ENCODE measurements at regions of chr1 and their contacts with region 1.

Region 1: DNA sequence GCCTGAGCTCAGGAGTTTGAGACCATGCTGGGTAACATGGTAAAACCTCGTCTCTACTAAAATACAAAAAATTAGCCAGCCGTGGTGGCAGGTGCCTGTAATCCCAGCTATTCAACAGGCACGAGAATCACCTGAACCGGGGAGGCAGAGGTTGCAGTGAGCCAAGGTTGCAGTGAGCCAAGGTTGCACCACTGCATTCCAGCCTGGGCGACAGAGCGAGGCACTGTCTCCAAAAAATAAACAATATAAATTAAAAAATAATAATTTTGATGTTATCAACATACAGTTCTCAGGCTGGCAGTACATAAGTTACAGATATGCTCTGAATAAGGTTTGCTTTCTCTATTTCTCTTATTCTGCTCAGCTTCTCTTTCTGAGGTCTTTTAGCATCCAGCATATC is 27.6 kb downstream of the GON4L start:
- DNase-seq: no peak
- H3K4me3 Mint-ChIP-seq: no peak overlapping the region
- H3K27ac Mint-ChIP-seq: no peak overlapping the region
- H3K4me1 Mint-ChIP-seq: peaks cover 12% of the 10 kb centered on the region
- H3K27me3 Mint-ChIP-seq: no peaks in the 10 kb centered on the region

Region 2: DNA sequence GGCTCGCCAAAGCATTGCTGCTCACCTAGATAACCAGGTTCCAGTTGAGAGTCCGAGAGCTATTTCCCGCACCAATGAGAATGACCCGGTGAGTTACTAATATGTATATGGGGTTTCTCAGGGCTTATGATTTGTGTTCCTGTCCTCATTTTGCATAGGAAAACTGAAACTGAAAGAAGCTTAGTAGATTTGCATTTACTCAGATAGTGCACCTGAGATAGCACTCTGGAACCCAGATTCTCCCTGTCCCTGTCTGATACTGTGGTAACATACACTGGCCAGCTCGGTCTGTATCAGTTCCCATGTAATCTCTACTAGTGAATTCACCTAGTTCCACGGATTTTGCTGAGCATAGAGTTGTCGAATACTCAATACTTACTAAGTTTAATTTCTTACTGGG is 112.3 kb before region 1 on chr1:
- CTCF ChIA-PET with region 1: no interaction called
- intact Hi-C with region 1: no loop called
- DNase-seq: no peak
- H3K4me3 Mint-ChIP-seq: no peak overlapping the region
- H3K27ac Mint-ChIP-seq: no peak overlapping the region
- H3K4me1 Mint-ChIP-seq: peaks cover 17% of the 10 kb centered on the region
- H3K27me3 Mint-ChIP-seq: no peaks in the 10 kb centered on the region

Region 3: DNA sequence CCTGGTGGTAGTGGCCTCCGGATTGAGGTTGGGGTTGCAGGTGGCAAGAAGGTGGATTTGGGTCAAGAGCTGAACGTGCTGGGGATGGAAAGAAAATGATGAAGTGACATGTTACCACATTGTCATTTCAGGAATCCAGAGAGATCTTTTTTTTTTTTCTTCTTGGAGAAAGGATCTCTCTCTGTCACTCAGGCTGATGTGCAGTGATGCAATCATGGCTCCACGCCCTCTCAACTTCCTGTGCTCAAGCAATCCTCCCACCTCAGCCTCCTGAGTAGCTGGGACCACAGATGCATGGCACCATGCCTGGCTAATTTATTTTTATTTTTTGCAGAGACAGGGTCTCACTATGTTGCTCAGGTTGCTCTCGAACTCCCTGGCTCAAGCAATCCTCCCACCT is 53.0 kb before region 1 on chr1:
- CTCF ChIA-PET with region 1: no interaction called
- intact Hi-C with region 1: loop called (anchors 10 kb)
- DNase-seq: peak; percentile 30
- H3K4me3 Mint-ChIP-seq: no peak overlapping the region
- H3K27ac Mint-ChIP-seq: peak overlapping the region; percentile 50
- H3K4me1 Mint-ChIP-seq: peaks cover 12% of the 10 kb centered on the region
- H3K27me3 Mint-ChIP-seq: no peaks in the 10 kb centered on the region